Endothelial cell of umbilical vein (primary cell): ENCODE measurements at regions of chr17 and their contacts with region 1.

Region 1: DNA sequence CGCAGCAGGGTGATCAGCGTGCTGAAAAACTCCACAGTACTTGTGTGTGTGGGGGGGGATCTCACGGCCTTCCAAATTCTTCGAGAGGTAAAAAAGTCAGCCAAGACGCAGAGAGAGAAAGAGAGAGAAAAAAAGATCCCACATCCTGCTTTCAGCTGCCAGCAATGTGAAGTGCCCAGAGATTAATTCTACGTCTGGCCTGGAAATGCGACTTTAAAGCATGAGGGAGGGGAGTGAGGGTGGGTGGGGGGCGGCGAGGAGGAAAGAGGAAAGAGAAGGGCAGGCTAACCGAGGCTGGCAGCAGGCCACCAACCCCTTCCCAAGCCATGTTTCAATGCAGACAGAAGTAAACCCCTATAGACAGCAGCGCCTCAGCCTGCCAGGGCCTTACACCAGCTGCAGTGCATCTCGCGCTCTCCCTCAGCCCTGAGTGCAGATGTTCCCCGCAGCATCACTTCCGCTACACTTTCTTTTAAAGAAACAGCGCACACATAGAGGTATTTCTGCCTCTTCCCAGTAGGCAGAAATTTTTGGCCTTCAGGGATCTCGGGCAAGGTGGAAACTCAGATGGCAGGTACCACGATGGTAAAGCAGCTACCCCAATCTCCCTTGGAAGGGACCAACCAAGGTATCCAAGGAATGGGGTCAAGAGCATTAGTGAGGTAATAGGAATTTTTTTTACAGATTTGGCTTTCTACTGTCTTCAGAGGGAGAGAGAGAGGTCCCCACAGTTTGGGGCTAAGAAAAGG is 87.8 kb downstream of the SMG6 start:
- DNase-seq: peak; percentile 84
- H3K4me3 ChIP-seq: no peak overlapping the region
- H3K27ac ChIP-seq: peak overlapping the region; percentile 81
- H3K4me1 ChIP-seq: peaks cover 46% of the 10 kb centered on the region
- H3K27me3 ChIP-seq: no peaks in the 10 kb centered on the region
- CTCF ChIP-seq: no peak
- POLR2A ChIP-seq: peak; percentile 54

Region 2: DNA sequence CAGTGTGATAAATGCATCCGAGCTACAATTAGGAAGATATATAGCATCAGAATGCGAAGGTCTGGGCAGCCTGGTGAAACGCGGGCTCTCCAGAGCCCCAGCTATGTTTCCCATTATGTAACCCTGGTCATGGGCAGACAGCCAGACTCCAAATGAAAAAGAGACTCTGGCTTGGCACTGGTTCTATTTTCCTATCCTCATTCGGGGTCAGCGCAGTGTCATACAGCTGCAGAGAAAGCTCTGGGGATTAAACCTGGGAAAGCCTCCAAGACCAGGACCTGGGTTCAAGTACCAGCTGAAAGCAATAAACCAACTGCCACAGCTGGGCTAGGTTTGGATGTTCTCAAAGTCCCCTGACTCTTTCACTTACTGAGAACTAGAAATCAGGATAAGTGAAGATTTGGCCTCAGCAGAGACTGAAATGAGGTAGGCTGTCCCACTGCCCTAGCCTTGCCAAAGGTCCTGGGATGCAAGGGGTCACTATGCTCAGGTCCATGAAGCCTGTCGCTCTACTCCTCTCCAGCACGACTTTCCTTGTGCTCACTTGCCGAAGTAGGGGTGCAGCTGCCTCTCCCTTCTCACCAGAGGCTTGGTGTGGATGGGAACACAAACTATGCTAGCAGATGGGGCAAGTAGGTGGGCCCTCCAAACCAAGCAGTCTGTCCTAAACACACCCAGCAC is 36.0 kb before region 1 on chr17:
- CTCF ChIA-PET with region 1: interaction called, 6 read pairs
- POLR2A ChIA-PET with region 1: interaction called, 3 read pairs
- dilution Hi-C with region 1: no loop called
- intact Hi-C with region 1: loop called (anchors 1 kb)
- DNase-seq: peak; percentile 98
- H3K4me3 ChIP-seq: no peak overlapping the region
- H3K27ac ChIP-seq: peak overlapping the region; percentile 94
- H3K4me1 ChIP-seq: peaks cover 75% of the 10 kb centered on the region
- H3K27me3 ChIP-seq: no peaks in the 10 kb centered on the region
- CTCF ChIP-seq: no peak
- POLR2A ChIP-seq: peak; percentile 29

Region 3: GRCh38 chr17:2192367-2193057 is 23.3 kb before region 1 on chr17:
- CTCF ChIA-PET with region 1: interaction called, 5 read pairs
- POLR2A ChIA-PET with region 1: interaction called, 3 read pairs
- dilution Hi-C with region 1: no loop called
- intact Hi-C with region 1: loop called (anchors 1 kb)
- DNase-seq: peak; percentile 98
- H3K4me3 ChIP-seq: no peak overlapping the region
- H3K27ac ChIP-seq: peak overlapping the region; percentile 88
- H3K4me1 ChIP-seq: peaks cover 40% of the 10 kb centered on the region
- H3K27me3 ChIP-seq: no peaks in the 10 kb centered on the region
- CTCF ChIP-seq: no peak
- POLR2A ChIP-seq: peak; percentile 75

Region 4: DNA sequence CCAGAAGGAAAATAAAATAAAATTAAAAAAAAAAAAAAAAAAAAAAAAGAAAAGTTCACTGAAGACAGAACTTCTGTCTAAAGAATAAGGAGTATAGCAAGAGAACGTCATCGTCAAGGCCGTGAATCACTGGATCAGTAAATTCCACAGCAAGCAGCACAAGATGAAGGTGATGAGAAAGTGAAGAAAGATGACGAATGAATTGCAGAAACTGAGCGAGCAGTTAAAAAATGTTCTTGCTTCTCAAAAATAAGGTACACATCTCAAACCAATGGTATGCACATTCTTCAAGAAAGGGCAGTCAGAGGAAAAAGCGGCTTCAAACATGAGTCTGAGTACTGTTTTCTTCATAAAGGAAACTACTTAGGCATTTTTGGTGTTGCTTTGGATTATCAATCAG is 16.9 kb before region 1 on chr17:
- CTCF ChIA-PET with region 1: interaction called, 10 read pairs
- POLR2A ChIA-PET with region 1: no interaction called
- dilution Hi-C with region 1: no loop called
- intact Hi-C with region 1: no loop called
- DNase-seq: no peak
- H3K4me3 ChIP-seq: no peak overlapping the region
- H3K27ac ChIP-seq: no peak overlapping the region
- H3K4me1 ChIP-seq: peaks cover 10% of the 10 kb centered on the region
- H3K27me3 ChIP-seq: no peaks in the 10 kb centered on the region
- CTCF ChIP-seq: no peak
- POLR2A ChIP-seq: no peak

Region 5: GRCh38 chr17:2238432-2239169 is 22.8 kb after region 1 on chr17:
- CTCF ChIA-PET with region 1: no interaction called
- POLR2A ChIA-PET with region 1: no interaction called
- dilution Hi-C with region 1: no loop called
- intact Hi-C with region 1: no loop called
- DNase-seq: peak; percentile 52
- H3K4me3 ChIP-seq: no peak overlapping the region
- H3K27ac ChIP-seq: peak overlapping the region; percentile 53
- H3K4me1 ChIP-seq: peaks cover 30% of the 10 kb centered on the region
- H3K27me3 ChIP-seq: no peaks in the 10 kb centered on the region
- CTCF ChIP-seq: no peak
- POLR2A ChIP-seq: no peak

Region 6: GRCh38 chr17:2401426-2402221 is 185.8 kb after region 1 on chr17:
- CTCF ChIA-PET with region 1: no interaction called
- POLR2A ChIA-PET with region 1: no interaction called
- dilution Hi-C with region 1: no loop called
- intact Hi-C with region 1: no loop called
- DNase-seq: peak; percentile 100
- H3K4me3 ChIP-seq: peak overlapping the region; percentile 11 to 69 (median 51)
- H3K27ac ChIP-seq: peak overlapping the region; percentile 99
- H3K4me1 ChIP-seq: peaks cover 43% of the 10 kb centered on the region
- H3K27me3 ChIP-seq: no peaks in the 10 kb centered on the region
- CTCF ChIP-seq: no peak
- POLR2A ChIP-seq: no peak